GM12878 (cell line): ENCODE measurements at regions of chr6 and their contacts with region 1.

Region 1: GRCh38 chr6:30533460-30534294 is 22.6 kb downstream of the GNL1 start:
- DNase-seq: no peak
- ATAC-seq: peak; percentile 46
- H3K4me3 ChIP-seq: 0 out of 2 replicates have a peak overlapping the region, but pooled peaks have one; percentile 5
- H3K27ac ChIP-seq: no peak overlapping the region
- H3K4me1 ChIP-seq: peaks cover 25% of the 10 kb centered on the region
- H3K27me3 ChIP-seq: no peaks in the 10 kb centered on the region
- CTCF ChIP-seq: no peak
- EP300 ChIP-seq: no peak
- POLR2A ChIP-seq: no peak
- RAD21 ChIP-seq: no peak

Region 2: DNA sequence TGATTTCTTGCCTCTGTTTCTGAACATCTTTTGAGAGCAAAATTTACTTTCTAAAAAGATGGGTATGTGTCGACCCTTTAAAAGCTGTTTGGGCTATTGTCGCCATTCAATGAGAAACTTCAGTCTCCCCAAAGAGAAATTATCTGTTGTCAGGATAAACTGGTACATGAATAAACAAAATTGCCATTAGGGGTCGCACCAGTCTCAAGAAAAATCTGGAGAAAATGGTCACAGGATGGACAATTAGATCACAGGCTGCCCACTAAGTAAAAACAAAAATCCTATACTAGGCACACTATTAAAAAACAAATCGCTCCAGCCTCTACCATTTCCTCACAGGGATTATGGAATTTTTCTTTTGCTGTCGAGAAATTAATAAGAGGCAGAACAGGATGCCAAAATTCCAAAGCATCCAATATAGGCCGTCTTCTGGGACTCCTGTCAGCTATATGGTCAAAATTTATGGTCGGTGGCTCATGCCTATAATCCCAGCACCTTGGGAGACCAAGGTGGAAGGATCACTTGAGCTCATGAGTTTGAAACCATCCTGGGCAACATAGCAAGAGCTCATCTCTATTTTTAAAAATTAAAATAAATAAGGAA is 49.9 kb before region 1 on chr6:
- CTCF ChIA-PET with region 1: interaction called, 480 read pairs
- POLR2A ChIA-PET with region 1: interaction called, 4 read pairs
- RAD21 ChIA-PET with region 1: interaction called, 77 read pairs
- SMC1A ChIA-PET with region 1: interaction called, 221 read pairs
- in situ Hi-C with region 1: no loop called
- intact Hi-C with region 1: loop called (anchors 1 kb)
- DNase-seq: peak; percentile 37
- ATAC-seq: peak; percentile 48
- H3K4me3 ChIP-seq: no peak overlapping the region
- H3K27ac ChIP-seq: no peak overlapping the region
- H3K4me1 ChIP-seq: peaks cover 12% of the 10 kb centered on the region; the same call in 1 of the 2 replicates
- H3K27me3 ChIP-seq: peaks cover 2 to 8% of the 10 kb centered on the region in 2 experiments; a peak in 3 of 4 replicates
- CTCF ChIP-seq: peak; percentile 47 to 73 (median 56); a peak in 5 of 6 replicates
- EP300 ChIP-seq: no peak
- POLR2A ChIP-seq: no peak
- RAD21 ChIP-seq: peak; percentile 90

Region 3: DNA sequence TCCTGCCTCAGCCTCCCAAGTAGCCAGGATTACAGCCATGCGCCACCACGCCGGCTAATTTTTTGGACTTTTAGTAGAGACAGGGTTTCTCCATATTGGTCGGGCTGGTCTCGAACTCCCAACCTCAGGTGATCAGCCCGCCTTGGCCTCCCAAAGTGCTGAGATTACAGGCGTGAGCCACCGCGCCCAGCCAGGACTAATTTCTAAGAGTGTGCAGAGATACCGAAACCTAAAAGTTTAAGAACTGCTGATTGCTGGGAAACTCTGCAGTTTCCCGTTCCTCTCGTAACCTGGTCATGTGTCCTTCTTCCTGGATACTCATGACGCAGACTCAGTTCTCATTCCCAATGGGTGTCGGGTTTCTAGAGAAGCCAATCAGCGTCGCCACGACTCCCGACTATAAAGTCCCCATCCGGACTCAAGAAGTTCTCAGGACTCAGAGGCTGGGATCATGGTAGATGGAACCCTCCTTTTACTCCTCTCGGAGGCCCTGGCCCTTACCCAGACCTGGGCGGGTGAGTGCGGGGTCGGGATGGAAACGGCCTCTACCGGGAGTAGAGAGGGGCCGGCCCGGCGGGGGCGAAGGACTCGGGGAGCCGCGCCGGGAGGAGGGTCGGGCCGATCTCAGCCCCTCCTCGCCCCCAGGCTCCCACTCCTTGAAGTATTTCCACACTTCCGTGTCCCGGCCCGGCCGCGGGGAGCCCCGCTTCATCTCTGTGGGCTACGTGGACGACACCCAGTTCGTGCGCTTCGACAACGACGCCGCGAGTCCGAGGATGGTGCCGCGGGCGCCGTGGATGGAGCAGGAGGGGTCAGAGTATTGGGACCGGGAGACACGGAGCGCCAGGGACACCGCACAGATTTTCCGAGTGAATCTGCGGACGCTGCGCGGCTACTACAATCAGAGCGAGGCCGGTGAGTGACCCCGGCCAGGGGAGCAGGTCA is 44.3 kb before region 1 on chr6 and contains the start of gene HLA-E:
- CTCF ChIA-PET with region 1: interaction called, 480 read pairs
- POLR2A ChIA-PET with region 1: interaction called, 10 read pairs
- RAD21 ChIA-PET with region 1: interaction called, 77 read pairs
- SMC1A ChIA-PET with region 1: interaction called, 221 read pairs
- in situ Hi-C with region 1: loop called (anchors 5 kb)
- intact Hi-C with region 1: no loop called
- DNase-seq: peak; percentile 99
- ATAC-seq: peak; percentile 87
- H3K4me3 ChIP-seq: peak within 1 kb of the TSS; percentile 94
- H3K27ac ChIP-seq: peak within 1 kb of the TSS; percentile 93
- H3K4me1 ChIP-seq: peaks cover 18% of the 10 kb centered on the region
- H3K27me3 ChIP-seq: no peaks in the 10 kb centered on the region
- CTCF ChIP-seq: no peak
- EP300 ChIP-seq: no peak
- POLR2A ChIP-seq: peak; percentile 94
- RAD21 ChIP-seq: no peak
- polyA plus RNA-seq, gene HLA-E: 35.1 to 62.3 TPM

Region 4: GRCh38 chr6:30500421-30501355 is 33.0 kb before region 1 on chr6:
- CTCF ChIA-PET with region 1: interaction called, 93 read pairs
- POLR2A ChIA-PET with region 1: interaction called, 4 read pairs
- RAD21 ChIA-PET with region 1: interaction called, 21 read pairs
- SMC1A ChIA-PET with region 1: interaction called, 15 read pairs
- in situ Hi-C with region 1: no loop called
- intact Hi-C with region 1: no loop called
- DNase-seq: no peak
- ATAC-seq: peak; percentile 29
- H3K4me3 ChIP-seq: no peak overlapping the region
- H3K27ac ChIP-seq: no peak overlapping the region
- H3K4me1 ChIP-seq: peaks cover 9% of the 10 kb centered on the region
- H3K27me3 ChIP-seq: no peaks in the 10 kb centered on the region; a peak in 1 of 4 replicates
- CTCF ChIP-seq: no peak
- EP300 ChIP-seq: no peak
- POLR2A ChIP-seq: no peak
- RAD21 ChIP-seq: no peak

Region 5: DNA sequence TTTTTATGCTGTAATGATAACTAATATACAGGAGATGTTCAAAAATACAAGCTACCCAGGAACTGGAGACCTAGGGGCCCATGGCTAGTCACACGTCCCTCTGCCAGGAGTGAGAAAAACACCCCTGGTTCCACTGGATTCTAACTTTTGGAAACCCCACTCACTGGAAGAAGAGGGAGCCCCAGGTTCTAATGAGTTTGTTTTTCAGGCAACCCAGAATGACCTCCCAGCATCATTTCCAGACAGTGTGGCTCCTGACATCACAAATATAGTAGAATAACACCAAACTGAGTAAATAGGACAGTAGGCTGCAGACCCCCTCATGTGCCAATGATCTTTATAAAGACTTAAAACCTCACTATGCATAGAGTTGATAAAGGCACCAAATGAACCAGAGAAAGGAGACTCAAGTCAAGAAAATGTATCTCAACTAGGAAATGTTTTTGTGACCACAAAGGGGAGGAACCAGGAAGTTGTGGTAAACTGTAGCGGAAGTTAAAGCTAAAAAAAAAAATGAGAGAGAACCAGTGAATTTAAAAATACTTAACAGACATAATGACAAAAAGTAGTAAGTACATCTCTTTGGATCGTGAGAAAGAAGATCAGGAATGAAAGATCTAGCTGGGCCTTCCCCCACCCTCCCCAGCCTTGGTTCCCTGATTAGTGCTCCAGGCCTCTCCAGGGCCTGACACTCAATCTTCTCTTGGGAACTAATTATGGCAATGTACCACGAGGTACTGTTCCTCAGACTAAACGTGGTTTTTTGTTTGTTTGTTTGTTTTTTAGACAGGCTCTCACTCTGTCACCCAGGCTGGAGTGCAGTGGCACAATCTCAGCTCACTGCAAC is 24.6 kb before region 1 on chr6:
- CTCF ChIA-PET with region 1: interaction called, 19 read pairs
- POLR2A ChIA-PET with region 1: interaction called, 13 read pairs
- RAD21 ChIA-PET with region 1: interaction called, 30 read pairs
- SMC1A ChIA-PET with region 1: interaction called, 71 read pairs
- in situ Hi-C with region 1: no loop called
- intact Hi-C with region 1: loop called (anchors 2 kb)
- DNase-seq: peak; percentile 79
- ATAC-seq: peak; percentile 76
- H3K4me3 ChIP-seq: peak overlapping the region; percentile 31
- H3K27ac ChIP-seq: peak overlapping the region; percentile 97
- H3K4me1 ChIP-seq: peaks cover 53% of the 10 kb centered on the region
- H3K27me3 ChIP-seq: no peaks in the 10 kb centered on the region
- CTCF ChIP-seq: no peak
- EP300 ChIP-seq: no peak
- POLR2A ChIP-seq: no peak
- RAD21 ChIP-seq: no peak

Region 6: DNA sequence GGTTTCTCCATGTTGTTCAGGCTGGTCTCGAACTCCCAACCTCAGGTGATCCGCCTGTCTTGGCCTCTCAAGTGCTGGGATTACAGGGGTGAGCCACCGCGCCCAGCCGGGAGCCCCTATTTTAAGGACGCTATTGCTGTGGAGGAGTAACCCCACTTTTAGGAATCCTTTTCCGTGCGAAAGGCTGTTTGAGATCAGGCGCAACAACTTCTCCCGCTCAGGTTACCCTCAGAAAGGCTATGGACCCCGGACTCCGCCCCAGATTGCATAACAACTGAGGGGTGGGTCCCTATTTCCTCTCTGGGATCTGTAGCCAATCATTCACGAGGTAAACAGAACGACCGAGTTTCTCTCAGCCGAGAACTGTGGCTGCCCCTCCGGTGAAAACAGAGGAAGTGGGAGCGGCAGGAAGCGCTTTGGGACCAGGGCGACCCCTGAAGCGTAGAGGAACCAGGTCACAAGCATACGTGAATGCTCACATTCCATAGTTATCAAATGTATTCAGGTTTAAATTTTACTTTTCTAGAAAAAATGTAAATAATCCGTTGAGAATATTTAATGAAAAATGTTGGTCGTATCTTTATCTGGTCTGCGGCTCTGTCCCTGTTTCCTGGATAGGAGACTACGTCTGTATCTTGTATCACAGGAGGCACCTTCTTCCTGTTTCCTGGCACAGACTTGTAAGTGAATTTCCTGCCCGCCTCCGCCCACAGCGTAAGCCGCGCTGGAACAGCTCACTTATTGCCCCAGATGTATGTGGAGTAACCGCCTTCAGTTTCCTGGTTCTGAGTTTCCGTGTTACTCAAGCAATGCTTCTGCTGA is 17.5 kb before region 1 on chr6:
- CTCF ChIA-PET with region 1: interaction called, 9 read pairs
- POLR2A ChIA-PET with region 1: interaction called, 9 read pairs
- RAD21 ChIA-PET with region 1: interaction called, 30 read pairs
- SMC1A ChIA-PET with region 1: interaction called, 71 read pairs
- in situ Hi-C with region 1: no loop called
- intact Hi-C with region 1: loop called (anchors 2 kb)
- DNase-seq: peak; percentile 92
- ATAC-seq: peak; percentile 95
- H3K4me3 ChIP-seq: peak overlapping the region; percentile 69
- H3K27ac ChIP-seq: peak overlapping the region; percentile 79
- H3K4me1 ChIP-seq: peaks cover 13% of the 10 kb centered on the region
- H3K27me3 ChIP-seq: no peaks in the 10 kb centered on the region
- CTCF ChIP-seq: no peak
- EP300 ChIP-seq: no peak
- POLR2A ChIP-seq: peak; percentile 55
- RAD21 ChIP-seq: no peak

Region 7: GRCh38 chr6:30672445-30673253 is 139.0 kb after region 1 on chr6 and contains the start of gene DHX16:
- CTCF ChIA-PET with region 1: interaction called, 12 read pairs
- POLR2A ChIA-PET with region 1: no interaction called
- RAD21 ChIA-PET with region 1: no interaction called
- SMC1A ChIA-PET with region 1: interaction called, 3 read pairs
- in situ Hi-C with region 1: no loop called
- intact Hi-C with region 1: no loop called
- DNase-seq: peak; percentile 90
- ATAC-seq: peak; percentile 90
- H3K4me3 ChIP-seq: peak within 1 kb of the TSS; percentile 99
- H3K27ac ChIP-seq: peak within 1 kb of the TSS; percentile 79
- H3K4me1 ChIP-seq: peaks cover 8% of the 10 kb centered on the region
- H3K27me3 ChIP-seq: no peaks in the 10 kb centered on the region
- CTCF ChIP-seq: peak; percentile 77 to 93 (median 88); a peak in 5 of 6 replicates
- EP300 ChIP-seq: no peak
- POLR2A ChIP-seq: peak; percentile 70
- RAD21 ChIP-seq: peak; percentile 64
- polyA plus RNA-seq, gene DHX16: 10.1 to 17.7 TPM